ENCODE measurements at regions of chr5 and their contacts with region 1.

Region 1: GRCh38 chr5:128201065-128201926 is 117.7 kb downstream of the SLC12A2 start:
- DNase-seq: peak; percentile 67

Region 2: GRCh38 chr5:127564002-127564769 is 637.1 kb before region 1 on chr5:
- in situ Hi-C with region 1: loop called (anchors 10 kb)
- DNase-seq: peak; percentile 65

Region 3: GRCh38 chr5:127875235-127876021 is 325.9 kb before region 1 on chr5:
- in situ Hi-C with region 1: loop called (anchors 25 kb)
- DNase-seq: peak; percentile 40

Region 4: DNA sequence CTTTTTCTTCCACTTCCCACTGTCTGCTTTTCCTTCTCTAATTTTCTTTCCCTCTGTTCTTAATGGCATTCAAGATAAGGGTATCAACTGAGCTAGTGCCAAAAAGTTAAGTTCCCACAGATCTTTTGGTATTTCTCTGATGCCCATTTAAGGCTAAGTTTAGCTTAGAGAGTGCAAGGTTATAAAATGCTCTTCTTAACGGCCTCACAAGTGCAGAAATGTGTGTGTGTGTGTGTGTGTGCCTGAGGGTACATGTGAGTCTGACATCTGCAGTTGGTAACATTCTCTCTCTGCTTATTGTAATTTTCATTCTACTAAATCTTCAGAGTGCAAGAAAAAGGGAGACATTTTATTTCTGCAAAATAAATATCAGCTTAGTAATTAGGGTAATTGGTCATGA is 312.5 kb after region 1 on chr5:
- in situ Hi-C with region 1: loop called (anchors 25 kb)
- DNase-seq: no peak

Region 5: DNA sequence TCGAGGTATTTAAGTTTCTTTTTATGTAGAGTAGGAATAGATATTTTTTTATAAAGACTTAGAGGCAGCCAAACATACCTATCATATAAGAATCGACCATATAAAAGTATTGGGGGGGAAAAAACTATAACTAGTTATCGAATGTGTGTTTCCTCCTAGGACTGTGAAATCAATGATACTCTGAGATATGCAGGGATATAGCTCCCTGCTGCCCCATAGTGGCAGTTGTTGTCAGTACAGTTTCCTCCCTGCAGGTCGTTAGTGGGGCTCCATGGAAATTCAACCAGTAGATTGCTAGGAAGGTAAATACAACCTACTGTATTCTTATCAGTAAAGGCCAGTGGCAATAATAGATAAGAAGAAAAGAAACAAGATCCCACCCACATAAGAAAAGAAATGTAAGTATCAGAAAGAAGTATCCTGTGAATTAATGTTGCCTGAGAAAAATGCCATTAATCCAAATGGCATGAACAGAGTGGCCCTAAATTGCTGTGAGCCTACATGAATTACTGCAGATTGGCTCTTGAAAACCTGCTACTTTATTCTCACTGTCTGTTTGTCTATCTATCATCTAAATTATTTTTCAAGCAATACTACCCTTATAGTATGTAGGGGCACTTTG is 473.6 kb after region 1 on chr5:
- in situ Hi-C with region 1: loop called (anchors 25 kb)
- DNase-seq: peak; percentile 75

Region 6: DNA sequence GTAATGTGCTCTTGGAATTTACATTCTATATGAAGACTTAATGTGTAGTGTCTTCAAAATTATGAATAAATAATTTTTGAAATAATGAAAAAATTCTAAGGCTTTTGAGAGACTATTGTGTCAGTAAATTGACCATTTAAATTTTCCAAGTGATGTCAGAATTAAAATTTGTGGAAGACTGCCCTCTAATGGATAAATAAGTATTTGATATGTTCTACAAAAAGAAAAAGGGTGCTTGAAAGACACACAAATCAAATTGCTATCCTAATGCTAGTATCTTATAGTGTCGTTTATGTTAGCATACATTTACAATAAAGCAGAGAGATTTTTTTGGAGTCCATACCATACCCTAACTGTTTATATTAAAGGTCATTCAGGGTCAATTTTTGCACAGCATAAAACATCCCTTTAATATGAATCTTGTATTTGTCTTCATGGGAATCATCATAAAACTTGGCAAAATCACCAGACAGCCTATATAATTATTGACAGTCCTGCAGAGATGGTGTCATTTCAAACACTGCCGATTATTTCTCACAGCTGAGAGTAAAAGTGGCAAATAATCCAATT is 643.1 kb after region 1 on chr5:
- in situ Hi-C with region 1: loop called (anchors 25 kb)
- DNase-seq: peak; percentile 33